ENCODE measurements at regions of chr4 and their contacts with region 1.

Region 1: DNA sequence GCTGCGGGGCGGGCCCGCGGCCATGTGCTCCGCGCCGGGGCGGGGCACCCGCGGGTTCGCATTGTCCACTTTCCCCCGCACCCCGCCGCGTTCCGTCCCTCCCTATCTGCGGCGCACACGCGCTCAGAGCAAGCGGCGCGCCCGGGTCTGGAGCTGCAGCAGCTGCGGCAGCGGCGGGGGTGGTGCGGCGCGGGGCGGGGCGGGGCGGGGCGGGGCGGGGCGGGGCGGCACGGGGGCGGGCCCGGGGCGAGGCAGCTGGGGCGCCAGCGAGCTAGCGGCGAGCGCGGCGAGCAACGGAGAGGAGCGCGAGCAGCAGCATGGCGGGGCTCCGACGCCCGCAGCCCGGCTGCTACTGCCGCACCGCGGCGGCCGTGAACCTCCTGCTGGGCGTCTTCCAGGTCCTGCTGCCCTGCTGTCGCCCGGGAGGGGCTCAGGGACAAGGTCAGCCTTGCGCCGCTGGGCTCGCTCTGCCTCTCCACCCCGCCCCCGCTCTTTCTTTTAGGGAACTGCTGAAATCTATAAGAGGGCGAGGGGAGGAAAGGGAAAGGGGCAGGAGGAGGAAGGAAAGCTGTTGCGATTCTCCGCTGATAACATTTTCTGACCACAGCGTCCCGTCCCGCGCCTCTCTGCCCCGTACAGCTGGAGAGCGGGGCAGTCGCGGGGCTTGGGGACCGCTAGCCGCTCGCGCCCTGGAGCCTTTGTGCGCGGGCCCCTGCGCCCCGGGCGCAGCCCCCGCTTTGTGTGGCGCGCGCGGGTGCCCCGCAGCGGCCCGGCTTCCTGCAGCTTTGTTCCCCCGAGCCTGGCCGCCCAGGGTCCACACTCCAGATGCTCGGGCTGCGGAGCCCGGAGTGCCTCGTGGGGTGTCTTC is at the start of gene TMEM131L:
- DNase-seq: peak; percentile 74
- ATAC-seq: peak; percentile 80
- H3K4me3 Mint-ChIP-seq: peak within 1 kb of the TSS; percentile 88
- H3K27ac Mint-ChIP-seq: peak within 1 kb of the TSS; percentile 92
- H3K4me1 Mint-ChIP-seq: peaks cover 46% of the 10 kb centered on the region
- H3K27me3 Mint-ChIP-seq: peaks cover 5% of the 10 kb centered on the region
- total RNA-seq, gene TMEM131L: 29.2 to 34.0 TPM

Region 2: GRCh38 chr4:153095448-153096204 is 370.7 kb before region 1 on chr4:
- CTCF ChIA-PET with region 1: no interaction called
- DNase-seq: no peak
- ATAC-seq: no peak
- H3K4me3 Mint-ChIP-seq: no peak overlapping the region
- H3K27ac Mint-ChIP-seq: no peak overlapping the region
- H3K4me1 Mint-ChIP-seq: no peaks in the 10 kb centered on the region
- H3K27me3 Mint-ChIP-seq: peaks cover 16% of the 10 kb centered on the region

Region 3: DNA sequence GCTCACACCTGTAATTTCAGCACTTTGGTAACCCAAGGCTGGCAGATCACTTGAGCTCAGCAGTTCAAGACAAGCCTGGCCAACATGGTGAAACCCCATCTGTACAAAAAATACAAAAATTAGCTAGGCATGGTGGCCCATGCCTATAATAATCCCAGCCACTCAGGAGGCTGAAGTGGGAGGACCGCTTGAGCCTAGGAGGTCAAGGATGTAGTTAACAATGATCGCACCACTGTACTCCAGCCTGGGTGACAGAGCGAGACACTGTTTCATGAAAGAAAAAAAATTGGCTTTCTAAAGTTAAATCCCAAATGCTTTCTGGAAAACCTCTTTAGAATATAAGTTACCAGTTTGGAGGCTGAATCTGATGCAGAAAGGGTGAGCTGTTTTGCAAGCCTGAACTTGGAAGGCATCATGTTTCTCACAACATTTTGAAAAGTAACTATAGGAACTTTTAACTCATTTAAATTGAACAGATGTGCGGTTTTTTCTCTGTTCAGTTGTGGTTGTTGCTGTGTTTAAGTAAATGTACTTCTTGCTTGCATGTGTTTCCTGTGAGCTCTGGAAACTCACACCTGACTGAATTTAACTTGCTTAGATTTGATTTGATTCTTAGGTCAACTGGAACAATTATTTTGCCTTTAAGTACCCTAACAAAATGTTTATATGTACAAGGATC is 40.0 kb before region 1 on chr4:
- CTCF ChIA-PET with region 1: interaction called, 18 read pairs
- DNase-seq: no peak
- ATAC-seq: peak; percentile 35
- H3K4me3 Mint-ChIP-seq: no peak overlapping the region
- H3K27ac Mint-ChIP-seq: peak overlapping the region; percentile 78
- H3K4me1 Mint-ChIP-seq: peaks cover 48% of the 10 kb centered on the region
- H3K27me3 Mint-ChIP-seq: peaks cover 2% of the 10 kb centered on the region

Region 4: DNA sequence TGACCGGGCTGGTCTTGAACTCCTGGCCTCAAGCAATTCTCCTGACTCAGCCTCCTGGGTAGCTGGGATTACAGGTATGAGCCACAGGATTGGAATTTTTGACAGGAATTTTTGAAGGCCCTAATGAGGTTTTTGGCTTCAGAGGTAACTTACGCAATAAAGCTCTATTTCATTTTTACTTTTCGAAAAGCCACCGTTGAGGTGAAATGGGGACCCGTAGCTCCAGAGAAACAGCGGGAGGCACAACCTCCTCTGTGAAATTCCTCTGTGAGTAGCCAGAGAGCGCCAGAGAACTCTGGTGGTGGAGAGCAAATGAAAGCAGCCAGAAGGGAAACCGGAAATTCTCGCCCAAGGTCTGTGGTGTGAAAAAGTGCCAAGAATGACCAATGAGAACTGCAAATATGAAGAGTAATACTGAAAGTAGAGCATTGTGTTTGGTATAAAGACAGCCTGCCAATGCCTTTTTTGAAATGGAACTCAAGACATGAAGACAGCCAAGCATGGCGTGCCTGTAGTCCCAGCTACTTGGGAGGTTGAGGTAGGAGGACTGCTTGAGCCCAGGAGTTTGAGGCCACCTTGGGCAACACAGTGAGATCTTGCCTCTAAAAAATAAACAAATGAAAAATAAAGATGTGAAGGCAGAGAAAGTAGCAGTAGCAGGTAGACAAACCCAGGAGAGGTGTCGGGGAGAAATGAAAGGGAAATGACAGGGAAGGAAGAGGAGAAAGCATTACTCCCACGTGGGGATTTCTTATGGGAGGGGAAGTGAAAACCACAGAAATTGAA is 33.2 kb before region 1 on chr4:
- CTCF ChIA-PET with region 1: interaction called, 52 read pairs
- DNase-seq: peak; percentile 93
- ATAC-seq: peak; percentile 93
- H3K4me3 Mint-ChIP-seq: peak overlapping the region; percentile 77
- H3K27ac Mint-ChIP-seq: peak overlapping the region; percentile 96
- H3K4me1 Mint-ChIP-seq: peaks cover 53% of the 10 kb centered on the region
- H3K27me3 Mint-ChIP-seq: peaks cover 6% of the 10 kb centered on the region

Region 5: DNA sequence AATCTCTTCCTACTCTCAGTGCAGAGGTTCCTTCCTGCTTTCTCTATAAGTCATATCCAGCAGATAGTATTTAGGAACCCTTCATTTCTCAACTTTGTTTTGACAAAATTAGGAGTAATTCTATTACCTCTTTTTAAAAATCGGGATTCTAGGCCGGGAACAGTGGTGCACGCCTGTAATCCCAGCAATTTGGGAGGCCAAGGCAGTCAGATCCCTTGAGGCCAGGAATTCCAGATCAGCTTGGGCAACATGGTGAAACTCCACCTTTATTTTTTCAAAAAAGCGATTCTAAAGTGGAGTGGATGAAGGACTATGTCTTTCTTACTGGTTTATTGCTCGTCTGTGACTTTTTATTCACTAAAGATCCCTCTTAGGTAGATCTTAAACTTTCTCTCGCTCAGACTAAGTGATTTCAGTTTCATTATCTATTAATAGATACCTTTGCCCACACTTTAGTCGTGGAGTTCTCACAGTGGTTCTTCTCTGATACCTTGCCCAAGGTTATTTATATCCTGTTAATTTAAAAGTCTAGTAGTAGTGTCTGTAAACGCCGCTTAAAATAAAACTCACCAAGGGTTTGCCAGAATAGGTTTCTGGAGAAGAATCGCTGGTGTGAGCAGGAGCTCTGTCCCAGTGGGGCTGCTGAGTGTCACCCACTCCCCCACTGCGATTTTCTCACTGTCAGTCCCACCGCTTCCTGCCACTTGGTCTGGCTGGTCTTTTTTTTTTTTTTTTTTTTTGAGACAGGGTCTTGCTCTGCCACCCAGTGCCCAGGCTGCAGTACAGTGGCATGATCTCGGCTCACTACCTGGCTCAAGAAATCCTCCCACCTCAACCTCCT is 27.2 kb before region 1 on chr4:
- CTCF ChIA-PET with region 1: interaction called, 52 read pairs
- DNase-seq: peak; percentile 62
- ATAC-seq: peak; percentile 88
- H3K4me3 Mint-ChIP-seq: peak overlapping the region; percentile 74
- H3K27ac Mint-ChIP-seq: peak overlapping the region; percentile 87
- H3K4me1 Mint-ChIP-seq: peaks cover 38% of the 10 kb centered on the region
- H3K27me3 Mint-ChIP-seq: peaks cover 4% of the 10 kb centered on the region

Region 6: GRCh38 chr4:153448003-153448731 is 18.1 kb before region 1 on chr4:
- CTCF ChIA-PET with region 1: interaction called, 22 read pairs
- DNase-seq: no peak
- ATAC-seq: no peak
- H3K4me3 Mint-ChIP-seq: no peak overlapping the region
- H3K27ac Mint-ChIP-seq: no peak overlapping the region
- H3K4me1 Mint-ChIP-seq: peaks cover 17% of the 10 kb centered on the region
- H3K27me3 Mint-ChIP-seq: no peaks in the 10 kb centered on the region

Region 7: DNA sequence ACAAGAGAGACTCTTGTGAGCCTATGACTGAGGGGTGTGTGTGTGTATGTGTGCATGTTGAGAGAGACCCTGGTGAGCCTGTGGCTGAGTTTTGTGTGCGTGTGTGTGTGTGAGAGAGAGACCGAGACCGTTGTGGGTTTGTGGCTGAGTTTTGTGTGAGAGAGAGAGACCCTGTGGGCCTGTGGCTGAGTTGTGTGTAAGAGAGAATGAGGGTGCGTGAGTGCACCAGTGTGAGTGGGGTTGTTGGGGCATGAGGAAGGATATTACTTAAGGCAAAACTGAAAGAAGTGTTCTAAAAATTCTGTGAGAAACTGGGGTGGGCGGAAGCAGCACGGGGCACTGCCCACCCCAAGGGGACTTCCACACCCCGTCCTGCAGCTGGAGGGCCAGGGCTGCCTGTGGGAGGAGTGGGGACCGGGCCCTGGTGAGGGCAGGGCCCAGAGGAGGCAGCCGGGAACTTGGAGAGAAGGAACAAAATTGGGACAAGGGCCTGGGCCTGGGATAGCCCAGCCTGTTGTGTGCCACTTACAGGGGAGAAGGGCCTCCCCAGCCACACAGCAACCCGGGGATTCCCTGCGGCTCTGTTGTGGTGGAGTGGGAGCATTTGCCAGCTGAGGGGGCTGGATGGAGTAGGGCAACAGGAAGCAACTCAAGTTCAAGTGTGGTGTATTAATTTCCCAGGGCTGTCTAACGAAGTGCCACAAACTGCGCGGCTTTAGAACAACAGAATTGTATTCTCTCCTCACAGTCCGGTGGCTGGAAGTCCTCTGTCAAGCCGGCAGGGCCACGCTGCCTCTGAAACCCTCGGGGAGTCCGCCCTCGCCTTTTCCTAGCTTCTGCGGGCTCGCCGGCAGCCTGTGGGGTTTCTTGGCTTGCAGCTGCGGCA is 21.9 kb after region 1 on chr4:
- CTCF ChIA-PET with region 1: interaction called, 50 read pairs
- DNase-seq: peak; percentile 79
- ATAC-seq: peak; percentile 62
- H3K4me3 Mint-ChIP-seq: peak overlapping the region; percentile 67
- H3K27ac Mint-ChIP-seq: peak overlapping the region; percentile 91
- H3K4me1 Mint-ChIP-seq: peaks cover 71% of the 10 kb centered on the region
- H3K27me3 Mint-ChIP-seq: no peaks in the 10 kb centered on the region

Region 8: GRCh38 chr4:153713866-153714646 is 247.7 kb after region 1 on chr4:
- CTCF ChIA-PET with region 1: no interaction called
- DNase-seq: no peak
- ATAC-seq: no peak
- H3K4me3 Mint-ChIP-seq: no peak overlapping the region
- H3K27ac Mint-ChIP-seq: no peak overlapping the region
- H3K4me1 Mint-ChIP-seq: peaks cover 3% of the 10 kb centered on the region
- H3K27me3 Mint-ChIP-seq: peaks cover 48% of the 10 kb centered on the region

Measured in activated CD8-positive, alpha-beta memory T cell treated with anti-CD3 and anti-CD28 coated beads, Interleukin-2, amount 10 ng/mL, durations not matched to agents 7 days and 5 days (primary cell).